ENCODE measurements at regions of chr4 and their contacts with region 1.

Region 1: GRCh38 chr4:127188856-127189255 is 443.9 kb upstream of the INTU start:
- DNase-seq: no peak
- H3K4me3 ChIP-seq: no peak overlapping the region
- H3K27ac ChIP-seq: no peak overlapping the region
- H3K4me1 ChIP-seq: no peaks in the 10 kb centered on the region
- H3K27me3 ChIP-seq: no peaks in the 10 kb centered on the region
- CTCF ChIP-seq: peak in 1 of 2 donors; percentile 35

Region 2: GRCh38 chr4:127240764-127241105 is 51.9 kb after region 1 on chr4:
- CTCF ChIA-PET with region 1: no interaction called
- dilution Hi-C with region 1: no loop called
- in situ Hi-C with region 1: no loop called
- intact Hi-C with region 1: no loop called
- DNase-seq: no peak
- H3K4me3 ChIP-seq: no peak overlapping the region
- H3K27ac ChIP-seq: no peak overlapping the region
- H3K4me1 ChIP-seq: no peaks in the 10 kb centered on the region
- H3K27me3 ChIP-seq: no peaks in the 10 kb centered on the region
- CTCF ChIP-seq: no peak

Region 3: DNA sequence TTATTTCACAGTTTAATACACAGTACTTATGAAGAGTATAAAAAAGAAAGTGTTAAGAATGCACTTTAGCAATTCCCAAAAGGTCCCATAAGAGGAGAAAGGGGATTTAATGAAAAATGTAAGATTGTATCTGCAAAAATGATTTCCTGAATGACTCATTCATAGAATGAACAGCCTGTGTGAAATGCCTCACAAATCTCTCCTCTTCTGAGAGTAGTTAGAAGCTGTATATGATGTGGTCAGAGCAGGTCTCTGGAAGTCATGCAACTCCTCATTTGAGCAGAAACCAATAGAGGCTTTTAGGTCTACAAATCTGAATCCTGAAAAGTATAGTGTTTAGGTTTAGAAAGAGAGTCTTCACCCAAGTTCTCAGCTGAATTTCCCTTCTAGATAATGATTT is 62.6 kb after region 1 on chr4:
- CTCF ChIA-PET with region 1: no interaction called
- dilution Hi-C with region 1: no loop called
- in situ Hi-C with region 1: no loop called
- intact Hi-C with region 1: no loop called
- DNase-seq: peak; percentile 51
- H3K4me3 ChIP-seq: no peak overlapping the region
- H3K27ac ChIP-seq: no peak overlapping the region
- H3K4me1 ChIP-seq: peaks cover 28% of the 10 kb centered on the region
- H3K27me3 ChIP-seq: no peaks in the 10 kb centered on the region
- CTCF ChIP-seq: no peak

Region 4: DNA sequence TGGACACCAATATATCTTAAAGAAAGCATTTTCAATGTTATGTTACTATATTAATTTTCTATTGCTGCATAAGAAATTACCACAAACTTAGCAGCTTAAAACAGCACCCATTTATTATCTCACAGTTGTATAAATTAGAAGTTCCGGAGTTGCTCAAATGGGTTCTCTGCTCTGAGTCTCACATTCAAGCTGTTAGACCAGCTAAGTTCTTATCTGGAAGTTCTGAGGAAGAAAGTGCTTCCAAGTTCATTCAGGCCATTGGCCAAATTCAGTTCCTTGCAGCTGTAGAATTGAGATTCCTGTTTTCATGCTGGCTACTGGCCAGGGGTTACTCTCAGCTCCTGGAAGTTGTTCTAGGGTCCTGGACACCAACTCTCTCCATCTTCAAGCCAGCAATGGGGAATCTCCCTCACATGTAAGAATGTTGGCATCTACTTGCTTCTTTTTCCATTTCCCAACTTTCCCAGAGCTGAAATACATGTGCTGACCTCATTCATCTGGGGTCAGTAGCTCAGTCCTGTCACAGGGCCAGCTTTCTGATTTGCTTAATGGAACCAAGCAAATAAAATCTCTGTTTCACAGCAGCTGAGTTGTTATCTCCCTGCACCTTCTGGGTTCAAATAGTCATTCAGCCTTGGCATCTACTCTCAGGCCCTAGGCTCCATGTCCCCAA is 344.3 kb after region 1 on chr4:
- CTCF ChIA-PET with region 1: no interaction called
- dilution Hi-C with region 1: no loop called
- in situ Hi-C with region 1: no loop called
- intact Hi-C with region 1: loop called (anchors 10 kb)
- DNase-seq: no peak
- H3K4me3 ChIP-seq: no peak overlapping the region
- H3K27ac ChIP-seq: no peak overlapping the region
- H3K4me1 ChIP-seq: no peaks in the 10 kb centered on the region
- H3K27me3 ChIP-seq: peaks cover 2% of the 10 kb centered on the region
- CTCF ChIP-seq: no peak

Region 5: GRCh38 chr4:127586922-127587571 is 398.2 kb after region 1 on chr4:
- CTCF ChIA-PET with region 1: no interaction called
- dilution Hi-C with region 1: no loop called
- in situ Hi-C with region 1: no loop called
- intact Hi-C with region 1: loop called (anchors 2 kb)
- DNase-seq: peak; percentile 45
- H3K4me3 ChIP-seq: no peak overlapping the region
- H3K27ac ChIP-seq: no peak overlapping the region
- H3K4me1 ChIP-seq: no peaks in the 10 kb centered on the region
- H3K27me3 ChIP-seq: no peaks in the 10 kb centered on the region
- CTCF ChIP-seq: peak; percentile 65 to 83